CD4-positive, alpha-beta T cell (primary cell): ENCODE measurements at regions of chr1 and their contacts with region 1.

Region 1: GRCh38 chr1:45521398-45522323 is at the start of gene PRDX1:
- DNase-seq: peak; percentile 93 to 97 (median 96)
- ATAC-seq: peak; percentile 90
- H3K4me3 ChIP-seq: peak within 1 kb of the TSS; percentile 90
- H3K4me3 Mint-ChIP-seq: peak within 1 kb of the TSS; percentile 97
- H3K27ac ChIP-seq: peak within 1 kb of the TSS; percentile 61 to 65
- H3K27ac Mint-ChIP-seq: peak within 1 kb of the TSS; percentile 86
- H3K4me1 ChIP-seq: peaks cover 36% of the 10 kb centered on the region
- H3K4me1 Mint-ChIP-seq: peaks cover 30% of the 10 kb centered on the region
- H3K27me3 ChIP-seq: no peaks in the 10 kb centered on the region
- H3K27me3 Mint-ChIP-seq: no peaks in the 10 kb centered on the region
- CTCF ChIP-seq: no peak
- total RNA-seq, gene PRDX1: 18.1 to 24.1 TPM

Region 2: DNA sequence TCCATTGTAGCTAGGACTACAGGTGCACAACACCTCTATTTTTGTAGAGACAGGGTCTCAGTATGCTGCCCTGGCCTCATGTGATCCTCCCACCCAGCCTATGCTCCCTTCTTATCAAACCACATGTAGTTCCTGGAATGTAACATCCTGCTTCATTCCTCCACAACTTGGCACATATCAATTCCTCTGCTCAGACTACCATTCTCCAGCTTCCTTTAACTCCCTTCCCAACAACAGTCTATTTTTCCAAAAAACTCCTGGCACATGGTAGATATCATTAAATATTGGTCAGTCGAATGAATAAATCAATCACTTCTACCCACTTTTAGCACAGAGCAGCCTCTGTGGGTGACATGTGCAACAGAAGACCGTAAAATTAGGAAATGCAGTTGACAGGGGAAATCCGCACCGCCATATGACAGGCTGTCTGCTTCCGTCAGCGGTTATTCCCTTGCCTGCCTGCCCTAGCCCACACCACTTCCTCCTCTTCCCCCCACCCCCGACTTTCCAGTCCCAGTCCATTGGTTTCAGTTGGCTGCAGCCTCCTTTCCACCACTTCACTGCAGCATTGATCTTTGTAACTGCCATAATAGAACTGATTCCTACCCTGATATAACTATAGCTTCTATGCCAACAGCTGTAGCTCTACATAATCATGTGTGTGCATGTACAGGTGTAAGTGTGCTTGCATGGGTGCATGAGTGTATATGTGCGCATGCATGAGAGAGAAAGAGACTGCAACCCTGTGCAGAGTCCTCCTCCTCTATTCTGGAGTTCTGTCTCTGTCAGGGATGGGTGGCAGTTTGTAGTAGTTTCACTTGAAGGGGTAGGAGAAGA is 22.1 kb after region 1 on chr1:
- CTCF ChIA-PET with region 1: interaction called, 5 read pairs
- POLR2A ChIA-PET with region 1: interaction called, 36 read pairs
- intact Hi-C with region 1: no loop called
- DNase-seq: peak; percentile 39 to 94 (median 60)
- ATAC-seq: peak; percentile 96
- H3K4me3 ChIP-seq: no peak overlapping the region
- H3K4me3 Mint-ChIP-seq: peak overlapping the region; percentile 40
- H3K27ac ChIP-seq: peak overlapping the region; percentile 58 to 78
- H3K27ac Mint-ChIP-seq: peak overlapping the region; percentile 63
- H3K4me1 ChIP-seq: peaks cover 32% of the 10 kb centered on the region
- H3K4me1 Mint-ChIP-seq: peaks cover 29% of the 10 kb centered on the region
- H3K27me3 ChIP-seq: no peaks in the 10 kb centered on the region
- H3K27me3 Mint-ChIP-seq: no peaks in the 10 kb centered on the region
- CTCF ChIP-seq: no peak

Region 3: GRCh38 chr1:45550401-45551351 is 29.0 kb after region 1 on chr1 and contains the start of gene AKR1A1:
- CTCF ChIA-PET with region 1: interaction called, 10 read pairs
- POLR2A ChIA-PET with region 1: interaction called, 46 read pairs
- intact Hi-C with region 1: loop called (anchors 1 to 2 kb)
- DNase-seq: peak; percentile 70 to 94 (median 84)
- ATAC-seq: peak; percentile 95
- H3K4me3 ChIP-seq: peak within 1 kb of the TSS; percentile 73
- H3K4me3 Mint-ChIP-seq: peak within 1 kb of the TSS; percentile 98
- H3K27ac ChIP-seq: peak within 1 kb of the TSS; percentile 85 to 90
- H3K27ac Mint-ChIP-seq: peak within 1 kb of the TSS; percentile 89
- H3K4me1 ChIP-seq: peaks cover 27% of the 10 kb centered on the region
- H3K4me1 Mint-ChIP-seq: peaks cover 26% of the 10 kb centered on the region
- H3K27me3 ChIP-seq: no peaks in the 10 kb centered on the region
- H3K27me3 Mint-ChIP-seq: no peaks in the 10 kb centered on the region
- CTCF ChIP-seq: no peak
- total RNA-seq, gene AKR1A1: 25.3 to 31.0 TPM

Region 4: DNA sequence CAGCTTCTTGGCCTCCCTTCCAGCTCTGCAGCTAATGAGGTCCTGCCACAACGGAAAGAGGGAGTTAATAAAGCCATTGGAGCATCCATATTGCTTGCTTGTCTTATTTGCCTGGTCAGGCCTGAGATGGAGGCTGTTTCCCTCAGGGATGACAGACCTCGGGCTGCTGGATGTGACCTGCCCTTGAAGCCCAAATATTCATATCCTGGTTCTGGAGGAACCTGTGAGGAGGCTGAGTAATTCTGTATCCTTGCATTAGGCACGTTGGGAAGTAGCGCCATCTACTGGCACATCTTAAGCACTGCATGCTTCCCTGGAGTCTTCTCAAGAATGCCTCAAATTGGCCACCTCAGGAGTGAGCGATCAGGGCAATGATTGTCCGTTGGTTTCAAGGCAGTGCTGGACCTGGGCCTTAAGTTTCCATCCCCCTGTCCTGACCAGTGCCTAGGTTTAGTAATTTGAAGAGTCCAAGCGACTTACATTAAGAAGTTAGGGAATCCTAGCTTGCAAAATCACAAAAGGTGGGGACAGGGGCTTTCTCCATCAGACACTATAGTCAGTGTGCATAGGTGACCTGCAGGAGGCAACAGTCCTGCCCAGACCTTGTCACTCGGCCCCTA is 48.4 kb after region 1 on chr1:
- CTCF ChIA-PET with region 1: interaction called, 5 read pairs
- POLR2A ChIA-PET with region 1: interaction called, 13 read pairs
- intact Hi-C with region 1: loop called in 1 of 2 experiments (anchors 2 kb)
- DNase-seq: peak; percentile 55 to 87 (median 60)
- ATAC-seq: peak; percentile 99
- H3K4me3 ChIP-seq: no peak overlapping the region
- H3K4me3 Mint-ChIP-seq: no peak overlapping the region
- H3K27ac ChIP-seq: no peak overlapping the region
- H3K27ac Mint-ChIP-seq: no peak overlapping the region
- H3K4me1 ChIP-seq: peaks cover 2% of the 10 kb centered on the region
- H3K4me1 Mint-ChIP-seq: peaks cover 5% of the 10 kb centered on the region
- H3K27me3 ChIP-seq: no peaks in the 10 kb centered on the region
- H3K27me3 Mint-ChIP-seq: no peaks in the 10 kb centered on the region
- CTCF ChIP-seq: peak; percentile 95

Region 5: DNA sequence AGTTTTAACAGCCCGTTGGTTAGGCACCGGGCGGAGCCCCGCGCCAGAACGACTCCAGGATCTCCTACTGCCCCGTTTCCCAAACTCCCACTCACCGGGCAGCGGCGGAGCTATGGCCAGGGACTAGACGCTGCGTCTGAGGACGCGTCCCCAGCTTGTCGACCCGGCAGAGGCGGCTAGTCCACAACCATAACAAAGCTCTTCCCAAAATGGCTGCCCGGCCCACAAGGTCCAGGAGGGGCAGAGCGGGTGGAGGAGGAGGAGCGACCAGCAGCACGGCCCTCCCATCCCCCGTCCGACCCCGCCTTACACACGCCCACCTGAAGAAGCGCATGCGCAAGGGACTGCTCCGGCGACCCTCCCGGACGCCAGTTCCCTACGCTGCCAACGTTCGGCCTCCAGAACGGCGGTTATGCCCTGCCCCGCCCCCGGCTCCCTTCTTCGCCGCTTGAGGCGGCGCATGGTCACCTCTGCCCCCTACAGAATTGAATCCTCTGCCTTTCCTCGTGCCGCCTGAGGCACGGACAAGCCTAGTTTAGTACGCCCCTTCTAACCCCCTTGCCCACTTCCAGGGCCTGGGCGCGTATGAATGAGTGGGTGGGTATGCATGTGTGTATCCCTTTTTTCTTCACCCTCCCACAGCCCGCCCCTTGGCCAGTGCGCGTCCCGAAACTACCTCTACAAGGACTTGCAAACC is 164.8 kb after region 1 on chr1 and contains the start of gene GPBP1L1:
- CTCF ChIA-PET with region 1: no interaction called
- POLR2A ChIA-PET with region 1: interaction called, 17 read pairs
- intact Hi-C with region 1: loop called (anchors 1 to 10 kb)
- DNase-seq: peak; percentile 96 to 99 (median 98)
- ATAC-seq: peak; percentile 68
- H3K4me3 ChIP-seq: peak within 1 kb of the TSS; percentile 95
- H3K4me3 Mint-ChIP-seq: peak within 1 kb of the TSS; percentile 99
- H3K27ac ChIP-seq: peak within 1 kb of the TSS; percentile 97
- H3K27ac Mint-ChIP-seq: peak within 1 kb of the TSS; percentile 100
- H3K4me1 ChIP-seq: peaks cover 44% of the 10 kb centered on the region
- H3K4me1 Mint-ChIP-seq: peaks cover 51% of the 10 kb centered on the region
- H3K27me3 ChIP-seq: no peaks in the 10 kb centered on the region
- H3K27me3 Mint-ChIP-seq: no peaks in the 10 kb centered on the region
- CTCF ChIP-seq: no peak
- total RNA-seq, gene GPBP1L1: 116 to 125 TPM